A549 (cell line): ENCODE measurements at regions of chr3 and their contacts with region 1.

Region 1: GRCh38 chr3:62207197-62207596 is 166.2 kb downstream of the FEZF2 start:
- DNase-seq: no peak
- ATAC-seq: no peak
- H3K4me3 ChIP-seq: no peak overlapping the region
- H3K27ac ChIP-seq: no peak overlapping the region
- H3K4me1 ChIP-seq: no peaks in the 10 kb centered on the region
- CTCF ChIP-seq: no peak
- EP300 ChIP-seq: no peak
- POLR2A ChIP-seq: no peak
- RAD21 ChIP-seq: no peak

Region 2: DNA sequence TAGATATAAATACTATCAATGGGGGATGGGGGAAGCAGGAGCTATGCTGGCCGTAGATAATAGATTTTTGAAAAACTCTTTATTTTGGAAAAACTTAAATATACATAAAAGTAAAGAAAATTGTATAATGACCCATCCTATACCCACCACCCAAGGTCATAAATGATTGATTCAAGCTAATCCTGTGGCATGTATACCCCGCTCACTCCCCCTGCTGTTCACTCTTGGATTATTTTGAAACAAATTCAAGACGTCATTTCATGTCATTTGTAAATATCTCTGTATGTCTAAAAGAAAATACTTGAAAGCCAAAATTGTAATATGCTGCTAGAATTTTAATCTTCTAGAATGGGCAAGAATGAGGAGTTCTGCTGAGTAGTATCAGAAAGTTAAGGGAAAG is 75.6 kb before region 1 on chr3:
- CTCF ChIA-PET with region 1: no interaction called
- POLR2A ChIA-PET with region 1: no interaction called
- DNase-seq: peak in 1 of 2 experiments; percentile 4
- ATAC-seq: no peak
- H3K4me3 ChIP-seq: no peak overlapping the region
- H3K27ac ChIP-seq: no peak overlapping the region
- H3K4me1 ChIP-seq: no peaks in the 10 kb centered on the region
- CTCF ChIP-seq: no peak
- EP300 ChIP-seq: no peak
- POLR2A ChIP-seq: no peak
- RAD21 ChIP-seq: peak; percentile 10 to 24; a peak in 1 of 5 replicates

Region 3: GRCh38 chr3:62188681-62189383 is 18.4 kb before region 1 on chr3:
- CTCF ChIA-PET with region 1: interaction called, 11 read pairs
- POLR2A ChIA-PET with region 1: no interaction called
- DNase-seq: peak; percentile 58 to 61
- ATAC-seq: peak; percentile 82 to 91; a peak in 5 of 6 replicates
- H3K4me3 ChIP-seq: no peak overlapping the region
- H3K27ac ChIP-seq: no peak overlapping the region
- H3K4me1 ChIP-seq: no peaks in the 10 kb centered on the region
- CTCF ChIP-seq: peak; percentile 63
- EP300 ChIP-seq: no peak
- POLR2A ChIP-seq: no peak
- RAD21 ChIP-seq: peak; percentile 73 to 76

Region 4: GRCh38 chr3:62238003-62238402 is 30.8 kb after region 1 on chr3:
- CTCF ChIA-PET with region 1: no interaction called
- POLR2A ChIA-PET with region 1: no interaction called
- DNase-seq: no peak
- ATAC-seq: no peak
- H3K4me3 ChIP-seq: no peak overlapping the region
- H3K27ac ChIP-seq: no peak overlapping the region
- H3K4me1 ChIP-seq: no peaks in the 10 kb centered on the region
- CTCF ChIP-seq: no peak
- EP300 ChIP-seq: no peak
- POLR2A ChIP-seq: no peak
- RAD21 ChIP-seq: no peak

Region 5: GRCh38 chr3:62374341-62375218 is 167.4 kb after region 1 on chr3:
- CTCF ChIA-PET with region 1: no interaction called
- POLR2A ChIA-PET with region 1: no interaction called
- DNase-seq: no peak
- ATAC-seq: no peak
- H3K4me3 ChIP-seq: no peak overlapping the region
- H3K27ac ChIP-seq: no peak overlapping the region
- H3K4me1 ChIP-seq: no peaks in the 10 kb centered on the region
- CTCF ChIP-seq: no peak
- EP300 ChIP-seq: no peak
- POLR2A ChIP-seq: no peak
- RAD21 ChIP-seq: no peak